Posterior vena cava (tissue), 2 donors: ENCODE measurements at regions of chr2 and their contacts with region 1.

Region 1: GRCh38 chr2:128321784-128322714 is 3.4 kb upstream of the HS6ST1 start:
- DNase-seq: peak; percentile 96

Region 2: DNA sequence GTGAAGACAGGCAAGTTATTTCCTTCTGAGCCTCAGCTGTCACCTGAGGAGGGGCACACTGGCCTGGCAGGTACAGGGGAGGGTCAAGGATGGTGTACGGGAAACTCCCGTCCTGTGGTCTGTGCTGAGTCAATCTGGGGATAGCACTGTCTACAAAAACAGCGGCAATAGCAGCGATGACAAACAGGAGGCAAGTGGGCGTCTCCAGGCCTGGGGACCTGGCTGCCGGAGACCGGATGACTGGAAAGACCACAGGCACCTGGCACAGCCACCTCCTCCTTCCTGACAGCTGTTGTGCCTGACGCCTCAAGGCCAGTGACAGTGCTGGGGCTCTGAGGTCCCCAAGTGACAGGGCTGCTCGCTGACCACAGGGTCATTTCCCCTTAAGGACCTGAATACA is 198.7 kb after region 1 on chr2:
- intact Hi-C with region 1: loop called in 1 of 2 experiments (anchors 10 kb)
- DNase-seq: no peak

Region 3: GRCh38 chr2:128736689-128737545 is 414.9 kb after region 1 on chr2:
- intact Hi-C with region 1: loop called (anchors 10 kb)
- DNase-seq: peak; percentile 94

Region 4: GRCh38 chr2:129160879-129161278 is 838.8 kb after region 1 on chr2:
- intact Hi-C with region 1: loop called in 1 of 2 experiments (anchors 5 kb)
- DNase-seq: no peak

Region 5: DNA sequence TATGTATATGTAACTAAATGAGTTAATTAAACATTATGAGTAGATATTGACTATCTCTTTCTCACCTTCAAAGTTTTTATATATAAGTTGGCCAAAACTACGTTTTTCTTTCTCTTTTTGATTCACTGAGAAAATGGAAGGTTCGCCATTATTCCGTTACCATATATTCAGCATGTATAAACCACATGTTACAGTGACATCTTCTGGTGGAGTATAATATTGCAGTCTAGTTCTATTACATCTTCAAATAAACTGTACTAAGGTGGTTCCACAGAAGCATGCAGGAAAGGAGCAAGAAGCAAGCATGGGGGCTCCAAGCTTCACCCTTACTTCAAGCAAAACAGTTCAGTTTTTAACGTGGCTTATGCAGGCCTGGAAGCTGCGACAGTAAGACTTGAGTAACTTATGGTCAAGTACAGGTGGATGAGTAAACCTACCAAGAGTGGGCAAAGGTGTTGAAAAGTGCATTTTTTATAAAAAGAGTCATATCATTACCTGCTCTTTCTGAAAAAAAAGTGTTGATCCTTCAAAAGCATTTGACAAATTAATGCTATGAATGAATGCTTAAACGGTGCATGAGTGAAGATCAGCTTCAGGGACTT is 1527.6 kb after region 1 on chr2:
- intact Hi-C with region 1: loop called in 1 of 2 experiments (anchors 10 kb)
- DNase-seq: no peak